ENCODE measurements at regions of chr6 and their contacts with region 1.

Region 1: DNA sequence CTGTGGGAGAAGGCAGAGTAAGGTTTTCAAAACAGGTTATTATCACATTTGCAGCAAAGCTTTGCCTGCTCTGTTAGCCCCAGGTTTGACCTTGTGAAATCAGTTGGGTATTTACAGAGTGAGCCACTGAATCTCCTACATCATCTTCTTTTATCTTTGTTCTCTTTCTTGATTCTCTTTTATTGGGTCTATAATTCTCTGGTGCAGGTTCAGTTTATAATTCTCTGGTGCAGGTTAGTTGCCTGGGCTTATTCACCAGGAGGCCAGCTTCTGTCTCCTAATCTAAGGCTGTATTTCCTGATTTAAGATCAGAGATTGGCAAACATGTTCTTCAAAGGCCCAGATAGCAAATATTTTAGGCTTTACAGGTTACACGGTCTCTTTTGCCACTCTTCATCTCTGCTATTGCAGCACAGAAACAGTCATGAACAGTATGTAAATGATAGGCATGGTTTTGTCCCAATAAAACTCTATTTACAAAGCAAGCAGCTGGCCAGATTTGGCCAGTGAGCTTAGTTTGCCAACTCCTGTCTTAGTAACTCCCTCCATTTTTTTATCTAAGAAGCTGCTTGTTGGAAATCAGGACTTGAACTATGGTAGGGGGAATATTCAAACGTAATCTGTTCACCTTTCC is 205.0 kb upstream of the RIMS1 start:
- DNase-seq: no peak
- ATAC-seq: no peak

Region 2: DNA sequence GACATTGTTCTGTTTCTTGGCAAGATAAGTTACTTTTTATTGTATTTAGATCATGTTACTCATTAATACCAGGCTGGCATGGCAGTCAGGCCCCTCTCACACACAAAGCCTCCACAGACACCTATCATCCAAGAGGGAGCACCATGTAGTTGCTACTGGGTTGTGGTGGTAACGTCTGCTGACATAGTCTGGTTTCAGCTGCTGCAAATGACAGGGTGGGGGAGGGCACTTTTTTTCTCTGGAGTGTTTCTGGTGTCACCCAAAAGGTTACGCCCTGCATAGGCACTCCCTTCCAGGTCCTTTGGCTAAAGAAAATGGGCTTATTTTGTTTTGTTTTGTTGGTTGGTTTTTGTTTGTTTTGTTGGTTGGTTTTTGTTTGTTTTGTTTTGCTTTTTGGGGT is 31.4 kb before region 1 on chr6:
- intact Hi-C with region 1: loop called (anchors 5 kb)
- DNase-seq: no peak
- ATAC-seq: no peak